GM12878 (cell line): ENCODE measurements at regions of chr16 and their contacts with region 1.

Region 1: DNA sequence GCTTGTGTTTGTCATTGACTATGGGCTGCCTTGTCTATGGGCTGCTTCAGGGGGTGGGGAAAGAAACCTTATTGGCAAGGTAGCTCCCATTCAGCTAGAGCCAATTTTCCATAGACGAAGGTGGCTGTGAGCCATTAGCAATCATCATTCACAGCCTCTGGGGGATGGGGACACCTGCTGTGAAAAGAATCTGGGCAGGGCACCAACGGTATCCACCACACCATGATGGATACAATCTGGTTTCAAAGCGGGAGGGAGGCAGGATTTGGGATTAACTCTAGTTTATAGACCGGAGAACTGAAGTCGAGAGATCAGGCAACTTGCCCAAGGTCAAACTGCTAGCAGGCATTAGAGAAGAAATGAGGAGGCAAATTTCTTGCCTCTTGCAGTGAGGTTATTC is 182.3 kb downstream of the SHISA9 start:
- DNase-seq: no peak
- ATAC-seq: no peak
- H3K4me3 ChIP-seq: no peak overlapping the region
- H3K27ac ChIP-seq: no peak overlapping the region
- H3K4me1 ChIP-seq: no peaks in the 10 kb centered on the region
- H3K27me3 ChIP-seq: no peaks in the 10 kb centered on the region
- CTCF ChIP-seq: no peak
- EP300 ChIP-seq: no peak
- POLR2A ChIP-seq: no peak
- RAD21 ChIP-seq: no peak

Region 2: GRCh38 chr16:13098536-13099127 is 15.0 kb after region 1 on chr16:
- CTCF ChIA-PET with region 1: interaction called, 13 read pairs
- POLR2A ChIA-PET with region 1: interaction called, 5 read pairs
- RAD21 ChIA-PET with region 1: interaction called, 27 read pairs
- SMC1A ChIA-PET with region 1: interaction called, 17 read pairs
- in situ Hi-C with region 1: no loop called
- intact Hi-C with region 1: no loop called
- DNase-seq: no peak
- ATAC-seq: peak; percentile 54
- H3K4me3 ChIP-seq: no peak overlapping the region
- H3K27ac ChIP-seq: no peak overlapping the region
- H3K4me1 ChIP-seq: no peaks in the 10 kb centered on the region
- H3K27me3 ChIP-seq: no peaks in the 10 kb centered on the region
- CTCF ChIP-seq: no peak
- EP300 ChIP-seq: no peak
- POLR2A ChIP-seq: no peak
- RAD21 ChIP-seq: no peak

Region 3: GRCh38 chr16:13206606-13207005 is 122.9 kb after region 1 on chr16:
- CTCF ChIA-PET with region 1: no interaction called
- POLR2A ChIA-PET with region 1: no interaction called
- RAD21 ChIA-PET with region 1: no interaction called
- SMC1A ChIA-PET with region 1: no interaction called
- in situ Hi-C with region 1: no loop called
- intact Hi-C with region 1: no loop called
- DNase-seq: no peak
- ATAC-seq: no peak
- H3K4me3 ChIP-seq: no peak overlapping the region
- H3K27ac ChIP-seq: no peak overlapping the region
- H3K4me1 ChIP-seq: no peaks in the 10 kb centered on the region
- H3K27me3 ChIP-seq: no peaks in the 10 kb centered on the region
- CTCF ChIP-seq: no peak
- EP300 ChIP-seq: no peak
- POLR2A ChIP-seq: no peak
- RAD21 ChIP-seq: no peak